ENCODE measurements at regions of chr3 and their contacts with region 1.

Region 1: GRCh38 chr3:41000471-41000870 is 198.8 kb upstream of the CTNNB1 start:
- DNase-seq: no peak
- H3K4me3 ChIP-seq: no peak overlapping the region
- H3K27ac ChIP-seq: no peak overlapping the region
- H3K4me1 ChIP-seq: no peaks in the 10 kb centered on the region
- H3K27me3 ChIP-seq: peaks cover 0 to 2% of the 10 kb centered on the region in 2 experiments
- CTCF ChIP-seq: no peak
- POLR2A ChIP-seq: no peak

Region 2: GRCh38 chr3:40524568-40525285 is 475.7 kb before region 1 on chr3 and contains the start of gene ZNF621:
- CTCF ChIA-PET with region 1: no interaction called
- POLR2A ChIA-PET with region 1: no interaction called
- dilution Hi-C with region 1: no loop called
- intact Hi-C with region 1: no loop called
- DNase-seq: peak; percentile 87
- H3K4me3 ChIP-seq: peak within 1 kb of the TSS; percentile 69 to 91 (median 84)
- H3K27ac ChIP-seq: peak within 1 kb of the TSS; percentile 71
- H3K4me1 ChIP-seq: peaks cover 14% of the 10 kb centered on the region
- H3K27me3 ChIP-seq: no peaks in the 10 kb centered on the region
- CTCF ChIP-seq: no peak
- POLR2A ChIP-seq: peak; percentile 94
- total RNA-seq, gene ZNF621: 20.6 and 22.5 TPM in 2 replicates

Region 3: DNA sequence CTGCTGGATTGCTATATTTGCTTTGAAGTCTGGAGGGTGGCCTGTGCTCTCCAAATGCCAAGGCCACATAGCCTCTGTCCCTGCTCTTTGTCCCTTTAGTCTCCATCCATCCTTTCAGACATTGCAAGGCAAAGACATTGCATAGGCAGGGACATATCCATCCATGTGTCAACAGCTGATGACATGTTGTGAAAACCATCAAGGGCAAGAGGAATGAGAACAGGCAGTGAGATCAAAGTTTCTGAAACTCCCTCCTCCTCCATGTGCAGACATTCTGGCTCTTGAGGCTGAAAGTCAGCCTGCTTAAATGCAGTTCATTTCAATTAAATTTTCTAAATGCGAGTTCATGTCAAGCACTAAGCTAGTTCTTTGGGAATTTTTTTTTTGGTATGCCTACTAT is 63.6 kb after region 1 on chr3:
- CTCF ChIA-PET with region 1: no interaction called
- POLR2A ChIA-PET with region 1: no interaction called
- dilution Hi-C with region 1: no loop called
- intact Hi-C with region 1: loop called (anchors 2 kb)
- DNase-seq: no peak
- H3K4me3 ChIP-seq: no peak overlapping the region
- H3K27ac ChIP-seq: no peak overlapping the region
- H3K4me1 ChIP-seq: no peaks in the 10 kb centered on the region
- H3K27me3 ChIP-seq: peaks cover 2 to 8% of the 10 kb centered on the region in 2 experiments
- CTCF ChIP-seq: no peak
- POLR2A ChIP-seq: no peak